Common myeloid progenitor, CD34-positive (primary cell): ENCODE measurements at regions of chr2 and their contacts with region 1.

Region 1: DNA sequence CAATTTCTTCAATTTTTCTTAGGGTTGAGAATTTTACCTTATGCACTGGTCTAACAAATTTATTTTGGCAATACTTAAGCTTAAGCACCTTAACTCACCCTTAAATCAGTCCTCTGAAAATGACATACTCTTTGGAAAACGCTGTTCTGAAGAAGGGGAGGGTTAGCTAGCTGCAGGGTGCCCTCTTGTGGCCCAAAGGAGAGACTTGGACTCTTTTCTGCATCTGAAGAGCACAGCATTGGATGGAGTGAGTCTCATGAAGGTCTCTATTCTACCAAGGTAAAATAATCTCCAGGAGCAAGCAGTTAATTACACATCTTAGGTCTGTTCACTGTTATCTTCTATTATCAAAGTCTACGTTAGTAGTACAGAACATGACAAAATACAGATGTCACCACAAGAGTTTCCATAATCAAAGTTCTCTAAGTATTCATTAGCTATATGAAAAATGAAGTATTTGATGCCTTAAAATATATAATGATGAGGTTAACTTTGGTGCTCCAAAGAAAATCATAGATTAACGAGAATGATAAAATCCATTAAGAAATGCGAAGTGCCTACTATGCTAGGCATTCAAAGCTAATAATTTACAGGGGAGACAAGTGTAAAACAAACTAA is 24.4 kb downstream of the PUM2 start:
- DNase-seq: peak; percentile 44 to 70 (median 69)
- H3K4me3 ChIP-seq: no peak overlapping the region
- H3K27ac ChIP-seq: no peak overlapping the region
- H3K4me1 ChIP-seq: peaks cover 0 to 6% (median 0%) of the 10 kb centered on the region in 4 experiments
- H3K27me3 ChIP-seq: no peaks in the 10 kb centered on the region

Region 2: GRCh38 chr2:20291106-20291564 is 35.1 kb before region 1 on chr2:
- CTCF ChIA-PET with region 1: interaction called, 13 read pairs
- POLR2A ChIA-PET with region 1: no interaction called
- DNase-seq: peak; percentile 77 to 85 (median 84)
- H3K4me3 ChIP-seq: no peak overlapping the region
- H3K27ac ChIP-seq: no peak overlapping the region
- H3K4me1 ChIP-seq: peaks cover 0 to 11% (median 4%) of the 10 kb centered on the region in 4 experiments
- H3K27me3 ChIP-seq: no peaks in the 10 kb centered on the region

Region 3: GRCh38 chr2:20304411-20304810 is 21.9 kb before region 1 on chr2:
- CTCF ChIA-PET with region 1: interaction called, 13 read pairs
- POLR2A ChIA-PET with region 1: no interaction called
- DNase-seq: no peak
- H3K4me3 ChIP-seq: no peak overlapping the region
- H3K27ac ChIP-seq: no peak overlapping the region
- H3K4me1 ChIP-seq: no peaks in the 10 kb centered on the region
- H3K27me3 ChIP-seq: no peaks in the 10 kb centered on the region

Region 4: DNA sequence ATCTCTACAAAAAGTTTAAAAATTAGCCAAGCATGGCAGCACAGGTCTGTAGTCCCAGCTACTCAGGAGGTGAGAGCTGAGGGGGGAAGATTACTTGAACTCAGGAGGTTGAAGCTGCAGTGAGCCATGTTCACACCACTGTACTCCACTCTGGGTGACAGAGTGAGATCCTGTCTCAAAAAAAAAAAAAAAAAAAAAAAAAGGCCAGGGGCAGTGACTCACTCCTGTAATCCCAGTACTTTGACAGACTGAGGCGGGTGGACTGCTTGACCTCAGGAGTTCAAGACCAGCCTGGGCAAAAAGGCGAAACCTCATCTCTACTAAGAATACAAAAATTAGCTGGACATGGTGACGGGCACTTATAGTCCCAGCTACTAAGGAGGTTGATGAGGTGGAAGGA is 12.6 kb before region 1 on chr2:
- CTCF ChIA-PET with region 1: interaction called, 10 read pairs
- POLR2A ChIA-PET with region 1: no interaction called
- DNase-seq: no peak
- H3K4me3 ChIP-seq: no peak overlapping the region
- H3K27ac ChIP-seq: no peak overlapping the region
- H3K4me1 ChIP-seq: peaks cover 0 to 4% (median 0%) of the 10 kb centered on the region in 4 experiments
- H3K27me3 ChIP-seq: no peaks in the 10 kb centered on the region

Region 5: DNA sequence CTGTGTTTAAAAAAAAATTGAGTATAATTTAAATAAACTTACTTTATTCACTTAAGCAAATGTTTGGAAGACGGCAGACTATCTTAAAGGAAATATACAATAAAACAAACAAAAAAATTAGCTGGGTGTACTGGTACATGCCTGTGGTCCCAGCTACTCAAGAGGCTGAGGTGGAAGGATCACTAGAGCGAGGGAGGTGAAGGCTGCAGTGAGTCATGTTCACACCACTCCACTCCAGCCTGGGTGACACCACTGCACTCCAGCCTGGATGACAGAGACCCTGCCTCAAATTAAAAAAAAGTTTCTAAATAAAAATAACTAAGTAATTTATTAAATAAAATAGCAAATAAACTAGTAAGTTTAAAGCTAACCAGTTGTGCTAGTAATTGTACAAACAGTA is 16.9 kb after region 1 on chr2:
- CTCF ChIA-PET with region 1: interaction called, 44 read pairs
- POLR2A ChIA-PET with region 1: interaction called, 4 read pairs
- DNase-seq: peak in 1 of 3 donors; percentile 36
- H3K4me3 ChIP-seq: no peak overlapping the region
- H3K27ac ChIP-seq: no peak overlapping the region
- H3K4me1 ChIP-seq: peaks cover 0 to 26% (median 15%) of the 10 kb centered on the region in 4 experiments
- H3K27me3 ChIP-seq: no peaks in the 10 kb centered on the region

Region 6: DNA sequence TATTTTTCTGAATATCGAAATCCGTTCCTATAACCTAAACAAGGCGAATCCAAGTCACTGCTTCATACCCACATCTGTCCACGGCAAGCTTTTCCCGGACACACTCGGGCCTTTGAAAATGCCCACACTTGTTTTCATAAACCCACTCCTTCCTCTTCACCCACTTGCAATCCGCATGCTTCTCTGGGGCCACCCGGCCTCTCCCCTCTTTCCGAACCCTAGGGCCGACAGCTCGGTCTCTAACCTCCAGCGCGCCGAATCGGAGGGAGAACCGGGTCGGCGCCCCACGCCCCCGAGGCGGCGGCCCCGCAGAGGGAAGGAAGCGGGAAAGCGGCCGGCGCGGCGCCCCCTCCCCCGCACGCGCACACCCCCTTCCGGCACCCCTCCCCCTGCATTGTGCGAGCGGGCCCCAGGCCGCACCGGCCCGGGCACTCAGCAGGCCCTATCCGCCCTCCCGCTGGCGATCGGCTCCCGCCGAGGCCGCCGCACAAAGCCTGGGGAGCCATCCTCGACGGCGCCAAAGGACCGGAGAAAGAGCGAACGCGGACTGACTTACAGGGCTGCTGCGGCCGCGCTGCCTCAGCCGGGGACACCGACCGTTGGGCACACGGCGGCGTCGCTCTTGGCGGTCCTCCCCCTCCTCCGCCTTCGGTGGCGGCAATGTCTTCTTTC is 23.9 kb after region 1 on chr2:
- CTCF ChIA-PET with region 1: interaction called, 20 read pairs
- POLR2A ChIA-PET with region 1: interaction called, 4 read pairs
- DNase-seq: peak; percentile 42 to 68 (median 57)
- H3K4me3 ChIP-seq: peak overlapping the region; percentile 84 to 98 (median 93)
- H3K27ac ChIP-seq: peak overlapping the region; percentile 93 to 95
- H3K4me1 ChIP-seq: peaks cover 14 to 46% (median 42%) of the 10 kb centered on the region in 4 experiments
- H3K27me3 ChIP-seq: no peaks in the 10 kb centered on the region

Region 7: GRCh38 chr2:20370191-20370590 is 43.9 kb after region 1 on chr2:
- CTCF ChIA-PET with region 1: no interaction called
- POLR2A ChIA-PET with region 1: no interaction called
- DNase-seq: no peak
- H3K4me3 ChIP-seq: no peak overlapping the region
- H3K27ac ChIP-seq: no peak overlapping the region
- H3K4me1 ChIP-seq: no peaks in the 10 kb centered on the region
- H3K27me3 ChIP-seq: no peaks in the 10 kb centered on the region

Region 8: DNA sequence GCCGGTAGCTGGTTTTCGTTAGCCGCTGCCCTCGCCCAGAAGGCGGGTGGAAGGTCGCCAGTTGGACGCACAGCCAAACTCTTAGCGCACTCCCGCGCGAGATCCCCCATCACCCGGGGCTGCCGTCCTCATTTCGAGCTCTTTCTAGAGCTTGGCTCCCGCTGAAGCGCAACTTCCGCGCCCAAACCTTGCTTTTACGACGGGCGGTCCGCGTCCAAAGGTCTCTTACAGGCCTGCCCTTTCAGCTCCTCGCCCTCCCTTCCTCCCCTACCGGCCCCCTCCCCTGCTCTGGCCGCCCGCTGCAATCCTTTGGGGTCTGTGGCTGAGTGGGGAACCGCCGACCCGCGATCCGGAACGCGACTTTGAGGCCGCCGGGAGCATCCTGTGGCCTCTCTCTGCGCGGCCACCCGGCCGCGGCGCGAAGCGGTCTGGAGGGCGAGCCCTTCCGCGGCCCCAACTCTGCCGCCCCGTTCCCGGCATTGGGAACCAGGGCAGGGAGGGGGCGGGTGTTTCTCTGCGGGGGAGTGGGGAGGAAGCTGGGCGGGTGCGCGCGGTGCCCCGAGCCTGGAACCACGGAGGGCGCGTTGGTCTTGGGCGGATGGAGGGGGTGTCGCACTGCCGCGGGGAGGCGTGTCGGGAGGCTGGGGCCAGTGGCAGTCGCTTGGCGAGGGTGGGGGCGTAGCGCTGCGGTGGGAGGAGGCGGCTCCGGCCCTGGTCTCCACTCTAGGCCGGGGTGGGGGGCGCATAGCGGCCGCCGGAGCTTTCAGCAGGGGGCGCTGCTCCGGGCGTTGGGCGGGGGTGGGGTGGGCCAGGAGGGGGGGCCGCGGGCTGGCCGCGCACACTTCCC is 340.3 kb after region 1 on chr2 and contains the start of gene GDF7:
- CTCF ChIA-PET with region 1: no interaction called
- POLR2A ChIA-PET with region 1: no interaction called
- DNase-seq: peak; percentile 27 to 74 (median 67)
- H3K4me3 ChIP-seq: peak within 1 kb of the TSS; percentile 15 to 84 (median 54)
- H3K27ac ChIP-seq: no peak within 1 kb of the TSS
- H3K4me1 ChIP-seq: peaks cover 0 to 35% (median 31%) of the 10 kb centered on the region in 4 experiments
- H3K27me3 ChIP-seq: peaks cover 3 to 95% (median 57%) of the 10 kb centered on the region in 5 experiments